Right lobe of liver (tissue), 6 donors: ENCODE measurements at regions of chr12 and their contacts with region 1.

Region 1: DNA sequence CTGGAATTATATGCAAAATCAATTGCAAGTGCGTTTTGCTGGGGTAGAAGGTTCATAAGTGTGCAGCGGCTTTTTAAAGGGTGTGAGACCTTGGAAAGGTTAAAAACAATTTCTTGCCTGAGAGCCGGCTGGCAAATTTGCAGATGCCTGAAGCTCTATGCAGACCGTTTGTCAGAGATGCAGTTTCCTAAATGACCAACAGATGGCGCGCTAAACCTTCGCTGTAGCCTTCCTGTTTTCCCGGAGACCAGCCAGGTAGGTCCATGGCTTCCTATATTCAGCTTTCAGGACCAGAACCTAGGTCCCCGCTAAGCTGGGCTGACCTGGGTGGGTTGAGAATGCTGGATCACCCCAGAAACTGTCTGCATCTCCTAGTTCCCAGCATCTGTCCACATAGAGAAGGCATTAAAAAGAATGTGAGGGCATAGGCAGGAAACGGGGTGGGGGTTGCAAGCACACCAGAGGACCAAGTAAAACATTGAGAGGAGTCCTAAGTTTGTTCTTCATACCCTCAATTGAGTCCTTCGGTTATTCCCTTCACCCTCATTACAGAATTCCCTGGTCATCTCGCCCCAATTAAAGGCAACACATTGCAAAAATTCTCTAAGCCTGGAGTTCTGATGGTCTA is 5.7 kb upstream of the NOS1 start:
- DNase-seq: peak; percentile 51 to 79 (median 63)
- ATAC-seq: peak; percentile 84 to 95 (median 91)
- H3K4me3 ChIP-seq: no peak overlapping the region
- H3K27ac ChIP-seq: no peak overlapping the region
- H3K4me1 ChIP-seq: no peaks in the 10 kb centered on the region
- H3K27me3 ChIP-seq: no peaks in the 10 kb centered on the region
- CTCF ChIP-seq: peak; percentile 89 to 95 (median 92)
- POLR2A ChIP-seq: no peak

Region 2: DNA sequence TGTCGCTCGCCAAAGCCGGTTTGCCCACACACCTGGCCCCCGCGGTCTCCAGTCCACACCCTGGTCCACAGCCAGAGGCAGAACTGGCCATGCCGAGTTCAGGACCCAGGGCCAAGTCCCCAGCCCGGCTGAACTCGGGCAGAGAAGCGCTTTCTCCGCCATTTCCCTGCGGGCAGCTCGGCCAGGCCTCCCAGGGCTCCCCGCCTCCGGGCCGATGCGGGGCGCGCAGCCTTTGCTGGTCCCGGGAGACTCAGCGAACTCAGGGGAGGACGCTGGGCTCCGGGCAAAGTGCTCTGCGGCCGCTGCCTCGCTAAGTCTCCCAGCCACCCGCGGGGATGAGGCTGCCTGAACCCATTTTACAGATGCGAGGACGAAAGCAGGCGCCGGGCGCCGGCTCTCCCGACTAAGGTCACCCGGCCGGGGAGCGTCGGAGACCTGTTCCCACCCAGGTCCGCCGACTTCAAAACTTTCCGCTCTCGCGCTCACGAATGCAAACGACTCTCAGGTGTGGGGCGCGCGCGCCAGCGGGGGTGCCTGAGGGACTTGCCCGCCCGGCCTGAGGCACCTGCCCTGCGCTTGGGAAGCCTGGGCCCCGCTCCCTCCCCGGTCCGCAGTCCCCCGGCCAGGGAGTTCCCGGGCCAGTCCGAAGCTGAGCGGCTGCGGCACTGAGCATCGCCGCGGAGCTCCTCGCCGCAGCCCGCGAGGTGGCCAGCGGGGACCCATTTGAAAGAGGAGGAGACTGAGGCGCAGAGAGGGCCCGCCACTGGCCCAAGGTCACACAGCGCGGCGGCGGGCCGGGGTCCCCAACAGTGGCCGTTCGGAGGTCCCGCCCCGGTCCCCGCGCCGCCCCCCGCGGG is 268.5 kb before region 1 on chr12:
- intact Hi-C with region 1: no loop called
- DNase-seq: peak in 2 of 3 donors; percentile 31 to 58
- ATAC-seq: peak; percentile 27 to 45 (median 33)
- H3K4me3 ChIP-seq: peak overlapping the region; percentile 38 to 56 (median 49)
- H3K27ac ChIP-seq: no peak overlapping the region
- H3K4me1 ChIP-seq: peaks cover 0 to 15% (median 2%) of the 10 kb centered on the region in 4 donors
- H3K27me3 ChIP-seq: peaks cover 0 to 3% of the 10 kb centered on the region in 2 donors
- CTCF ChIP-seq: no peak
- POLR2A ChIP-seq: no peak

Region 3: DNA sequence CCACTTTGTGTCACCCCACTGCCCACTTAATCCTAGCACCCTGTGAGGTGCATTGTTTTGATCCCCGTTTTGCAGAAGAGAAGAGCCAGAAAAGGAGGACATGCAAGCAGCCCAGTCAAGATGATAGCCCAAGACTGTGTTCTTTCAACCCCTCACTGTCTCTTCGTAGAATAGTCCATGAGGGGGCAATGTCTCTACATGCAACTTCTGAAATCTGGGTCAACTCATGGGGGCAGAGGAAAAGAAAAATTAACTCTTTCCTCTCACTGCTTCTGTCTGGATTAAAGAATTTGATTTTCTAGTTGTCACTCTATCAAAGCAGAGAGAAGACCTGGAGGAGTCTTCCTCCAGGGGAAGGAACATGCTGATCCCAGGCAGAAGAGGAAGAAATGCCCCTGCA is 223.9 kb after region 1 on chr12:
- intact Hi-C with region 1: loop called in 1 of 2 experiments (anchors 2 kb)
- DNase-seq: no peak
- ATAC-seq: no peak
- H3K4me3 ChIP-seq: no peak overlapping the region
- H3K27ac ChIP-seq: no peak overlapping the region
- H3K4me1 ChIP-seq: no peaks in the 10 kb centered on the region
- H3K27me3 ChIP-seq: no peaks in the 10 kb centered on the region
- CTCF ChIP-seq: no peak
- POLR2A ChIP-seq: no peak

Region 4: DNA sequence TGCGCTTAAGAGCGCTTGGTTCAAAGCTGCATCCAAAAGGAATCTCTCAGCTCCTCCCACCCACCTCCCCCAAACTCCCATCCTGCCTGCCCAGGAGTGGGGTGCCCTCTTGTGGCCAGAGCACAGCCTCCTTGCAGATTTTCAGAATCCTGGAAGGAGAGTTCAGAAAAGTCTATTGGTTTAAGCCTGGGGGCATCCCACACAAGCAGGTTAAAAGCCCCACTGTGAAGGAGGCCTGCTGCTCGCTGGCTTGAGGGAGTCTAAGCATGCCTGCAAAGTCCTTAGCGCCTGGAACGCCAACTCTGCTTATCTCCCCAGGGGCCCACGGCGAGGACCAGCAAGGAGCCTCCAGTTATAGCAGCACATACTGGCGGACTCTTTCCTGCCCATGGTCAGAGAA is 304.6 kb after region 1 on chr12:
- intact Hi-C with region 1: loop called in 1 of 2 experiments (anchors 5 kb)
- DNase-seq: peak; percentile 48 to 56 (median 53)
- ATAC-seq: peak; percentile 54 to 65 (median 58)
- H3K4me3 ChIP-seq: no peak overlapping the region
- H3K27ac ChIP-seq: no peak overlapping the region
- H3K4me1 ChIP-seq: no peaks in the 10 kb centered on the region
- H3K27me3 ChIP-seq: no peaks in the 10 kb centered on the region
- CTCF ChIP-seq: peak; percentile 20 to 61 (median 51)
- POLR2A ChIP-seq: no peak

Region 5: GRCh38 chr12:117836999-117837736 is 470.0 kb after region 1 on chr12:
- intact Hi-C with region 1: loop called in 1 of 2 experiments (anchors 10 kb)
- DNase-seq: peak; percentile 69 to 77 (median 74)
- ATAC-seq: peak; percentile 78 to 90 (median 79)
- H3K4me3 ChIP-seq: no peak overlapping the region
- H3K27ac ChIP-seq: no peak overlapping the region
- H3K4me1 ChIP-seq: no peaks in the 10 kb centered on the region
- H3K27me3 ChIP-seq: no peaks in the 10 kb centered on the region
- CTCF ChIP-seq: peak in 3 of 4 donors; percentile 84 to 97 (median 94)
- POLR2A ChIP-seq: no peak